Caco-2 (cell line): ENCODE measurements at regions of chr6 and their contacts with region 1.

Region 1: DNA sequence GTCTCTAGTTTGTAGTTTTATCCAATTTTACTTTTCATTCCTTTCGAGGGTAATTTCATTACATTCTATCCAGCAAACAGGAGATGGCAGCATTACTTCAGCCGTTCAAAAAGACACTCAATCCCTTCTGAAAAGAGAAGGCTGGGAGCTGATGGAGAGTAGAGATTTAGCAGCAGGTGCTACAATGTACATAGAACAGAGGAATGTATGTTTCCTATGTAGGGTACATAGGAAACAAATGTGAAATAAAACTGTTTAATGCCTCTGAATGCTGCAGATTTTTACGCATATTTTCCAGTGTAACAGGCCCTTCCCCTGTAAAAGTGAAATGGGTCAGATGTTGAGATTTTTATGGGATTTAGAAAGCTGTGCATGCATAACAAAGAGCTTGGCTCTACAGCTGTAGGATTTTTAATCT is 16.0 kb downstream of the RPS12 start:
- DNase-seq: peak in 1 of 2 experiments; percentile 39
- H3K4me3 ChIP-seq: no peak overlapping the region
- H3K4me3 Mint-ChIP-seq: no peak overlapping the region
- H3K27ac Mint-ChIP-seq: no peak overlapping the region
- H3K4me1 ChIP-seq: no peaks in the 10 kb centered on the region
- H3K4me1 Mint-ChIP-seq: no peaks in the 10 kb centered on the region
- H3K27me3 ChIP-seq: no peaks in the 10 kb centered on the region
- H3K27me3 Mint-ChIP-seq: peaks cover 1% of the 10 kb centered on the region
- CTCF ChIP-seq: peak; percentile 32 to 55

Region 2: DNA sequence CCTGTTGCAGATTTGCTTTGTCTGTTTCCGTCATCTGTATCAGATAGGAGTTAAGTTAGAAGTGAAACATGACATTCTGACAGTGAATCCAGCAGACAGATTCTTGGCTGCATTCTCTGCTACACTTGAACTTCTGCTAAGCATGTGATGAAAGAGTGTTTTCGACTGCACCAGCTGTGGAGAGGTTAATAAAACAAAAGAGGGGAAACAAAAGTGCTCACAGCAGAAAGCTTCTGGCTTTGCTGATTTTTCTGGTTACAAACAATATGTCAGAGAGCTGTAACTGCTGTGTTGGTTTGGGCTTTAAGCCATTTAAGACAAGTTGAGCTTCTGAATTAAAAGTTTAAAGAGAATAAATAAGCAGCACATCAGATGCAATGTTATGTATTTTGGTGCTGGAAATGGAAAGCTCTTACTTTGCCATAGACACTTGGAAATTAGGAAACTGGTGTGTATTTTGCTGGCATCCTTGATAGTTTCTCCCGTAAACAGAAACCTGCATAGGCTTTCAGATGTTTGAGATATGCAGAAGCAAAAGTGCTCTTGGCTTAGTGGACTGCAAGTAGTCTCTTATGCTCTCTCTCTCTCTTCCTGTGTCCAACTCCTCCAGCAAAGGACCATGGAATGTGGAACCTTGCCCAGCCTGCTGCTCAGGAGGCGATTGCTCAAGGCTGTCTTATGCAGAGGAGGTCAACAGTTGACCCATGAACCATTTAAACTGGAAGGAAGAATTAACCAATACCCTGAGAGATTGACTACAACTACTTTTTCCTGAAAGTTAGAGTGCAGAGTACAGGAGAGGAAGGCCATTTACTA is 88.9 kb after region 1 on chr6:
- CTCF ChIA-PET with region 1: no interaction called
- POLR2A ChIA-PET with region 1: no interaction called
- intact Hi-C with region 1: loop called (anchors 10 kb)
- DNase-seq: peak; percentile 59 to 73
- H3K4me3 ChIP-seq: no peak overlapping the region
- H3K4me3 Mint-ChIP-seq: no peak overlapping the region
- H3K27ac Mint-ChIP-seq: no peak overlapping the region
- H3K4me1 ChIP-seq: 0 out of 2 replicates have a peak, but pooled peaks cover 6% of the 10 kb centered on the region
- H3K4me1 Mint-ChIP-seq: peaks cover 10% of the 10 kb centered on the region
- H3K27me3 ChIP-seq: peaks cover 1% of the 10 kb centered on the region; the same call in 1 of the 2 replicates
- H3K27me3 Mint-ChIP-seq: peaks cover 3% of the 10 kb centered on the region
- CTCF ChIP-seq: no peak

Region 3: DNA sequence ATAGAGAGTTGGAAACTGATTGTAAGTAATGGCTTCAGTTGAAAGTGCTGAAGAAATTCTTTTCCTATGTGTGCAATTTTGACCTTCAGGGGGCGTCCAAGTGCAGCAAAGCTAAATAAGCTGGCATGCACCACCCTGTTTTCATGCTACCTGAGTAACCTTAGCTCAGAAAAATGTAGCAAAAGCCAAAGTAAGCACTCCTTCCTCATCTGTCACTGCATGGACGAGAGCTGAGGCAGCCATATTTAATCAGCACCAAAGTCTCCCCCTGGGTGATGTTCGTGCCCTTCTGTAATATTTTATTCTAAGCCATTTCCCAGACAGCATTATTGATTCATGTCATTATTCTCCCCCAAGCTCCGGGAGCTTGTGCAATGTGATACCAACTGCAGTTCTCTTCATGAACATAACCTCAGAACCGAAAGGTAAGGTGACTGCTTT is 107.1 kb after region 1 on chr6:
- CTCF ChIA-PET with region 1: no interaction called
- POLR2A ChIA-PET with region 1: no interaction called
- intact Hi-C with region 1: no loop called
- DNase-seq: peak; percentile 38 to 49
- H3K4me3 ChIP-seq: no peak overlapping the region
- H3K4me3 Mint-ChIP-seq: no peak overlapping the region
- H3K27ac Mint-ChIP-seq: no peak overlapping the region
- H3K4me1 ChIP-seq: no peaks in the 10 kb centered on the region
- H3K4me1 Mint-ChIP-seq: no peaks in the 10 kb centered on the region
- H3K27me3 ChIP-seq: no peaks in the 10 kb centered on the region; the same call in 1 of the 2 replicates
- H3K27me3 Mint-ChIP-seq: peaks cover 17% of the 10 kb centered on the region
- CTCF ChIP-seq: peak; percentile 36 to 57

Region 4: DNA sequence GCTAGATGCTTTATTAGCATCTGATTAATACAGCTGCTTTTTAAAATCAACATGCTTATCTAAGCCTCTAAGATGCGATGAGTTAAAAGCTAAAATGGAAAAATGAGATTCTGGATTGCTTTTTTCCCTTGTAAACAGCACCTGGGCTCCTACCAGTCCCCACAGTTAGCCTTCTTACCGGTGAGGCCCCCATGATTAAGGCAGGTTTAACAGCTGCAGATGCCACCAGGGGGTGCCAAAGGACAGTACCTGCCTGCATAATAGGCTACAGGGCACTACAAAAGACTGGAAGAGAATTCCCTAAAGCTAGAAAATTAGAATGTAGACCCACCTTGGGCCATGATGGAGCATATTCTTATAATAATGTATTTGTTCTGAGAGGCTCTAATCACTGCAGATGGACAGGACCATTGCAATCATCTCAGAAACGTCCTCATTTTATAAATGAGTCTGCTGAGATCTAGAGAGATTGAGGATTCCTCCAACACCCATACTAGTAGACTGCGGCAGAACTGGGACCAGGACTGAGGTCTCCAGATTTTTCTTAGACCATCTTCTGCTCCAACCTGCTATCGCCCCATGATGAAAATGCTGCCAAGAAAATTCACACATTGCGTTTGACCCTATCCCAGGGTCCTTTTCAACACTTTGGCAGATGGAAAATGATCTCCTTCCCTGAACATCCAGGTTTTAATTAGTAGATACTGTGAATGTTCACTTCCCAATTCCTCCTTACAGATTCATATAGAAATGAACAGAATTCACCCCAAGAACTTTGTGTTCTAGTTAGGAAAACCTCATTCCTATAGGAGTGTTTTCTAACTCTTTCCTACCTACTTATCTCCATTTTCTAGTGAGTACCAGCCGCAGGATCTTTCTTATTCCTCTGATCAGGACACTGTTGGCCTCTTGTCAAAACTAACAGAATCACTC is 132.9 kb after region 1 on chr6:
- CTCF ChIA-PET with region 1: interaction called, 6 read pairs
- POLR2A ChIA-PET with region 1: no interaction called
- intact Hi-C with region 1: loop called (anchors 2 kb)
- DNase-seq: peak; percentile 69 to 81
- H3K4me3 ChIP-seq: no peak overlapping the region
- H3K4me3 Mint-ChIP-seq: no peak overlapping the region
- H3K27ac Mint-ChIP-seq: no peak overlapping the region
- H3K4me1 ChIP-seq: no peaks in the 10 kb centered on the region
- H3K4me1 Mint-ChIP-seq: no peaks in the 10 kb centered on the region
- H3K27me3 ChIP-seq: no peaks in the 10 kb centered on the region
- H3K27me3 Mint-ChIP-seq: peaks cover 6% of the 10 kb centered on the region
- CTCF ChIP-seq: peak; percentile 87 to 88

Region 5: GRCh38 chr6:133040094-133040802 is 209.9 kb after region 1 on chr6:
- CTCF ChIA-PET with region 1: no interaction called
- POLR2A ChIA-PET with region 1: no interaction called
- intact Hi-C with region 1: loop called (anchors 1 kb)
- DNase-seq: peak in 1 of 2 experiments; percentile 38
- H3K4me3 ChIP-seq: no peak overlapping the region
- H3K4me3 Mint-ChIP-seq: no peak overlapping the region
- H3K27ac Mint-ChIP-seq: no peak overlapping the region
- H3K4me1 ChIP-seq: no peaks in the 10 kb centered on the region
- H3K4me1 Mint-ChIP-seq: no peaks in the 10 kb centered on the region
- H3K27me3 ChIP-seq: no peaks in the 10 kb centered on the region
- H3K27me3 Mint-ChIP-seq: no peaks in the 10 kb centered on the region
- CTCF ChIP-seq: peak; percentile 27 to 55